ENCODE measurements at regions of chr1 and their contacts with region 1.

Region 1: DNA sequence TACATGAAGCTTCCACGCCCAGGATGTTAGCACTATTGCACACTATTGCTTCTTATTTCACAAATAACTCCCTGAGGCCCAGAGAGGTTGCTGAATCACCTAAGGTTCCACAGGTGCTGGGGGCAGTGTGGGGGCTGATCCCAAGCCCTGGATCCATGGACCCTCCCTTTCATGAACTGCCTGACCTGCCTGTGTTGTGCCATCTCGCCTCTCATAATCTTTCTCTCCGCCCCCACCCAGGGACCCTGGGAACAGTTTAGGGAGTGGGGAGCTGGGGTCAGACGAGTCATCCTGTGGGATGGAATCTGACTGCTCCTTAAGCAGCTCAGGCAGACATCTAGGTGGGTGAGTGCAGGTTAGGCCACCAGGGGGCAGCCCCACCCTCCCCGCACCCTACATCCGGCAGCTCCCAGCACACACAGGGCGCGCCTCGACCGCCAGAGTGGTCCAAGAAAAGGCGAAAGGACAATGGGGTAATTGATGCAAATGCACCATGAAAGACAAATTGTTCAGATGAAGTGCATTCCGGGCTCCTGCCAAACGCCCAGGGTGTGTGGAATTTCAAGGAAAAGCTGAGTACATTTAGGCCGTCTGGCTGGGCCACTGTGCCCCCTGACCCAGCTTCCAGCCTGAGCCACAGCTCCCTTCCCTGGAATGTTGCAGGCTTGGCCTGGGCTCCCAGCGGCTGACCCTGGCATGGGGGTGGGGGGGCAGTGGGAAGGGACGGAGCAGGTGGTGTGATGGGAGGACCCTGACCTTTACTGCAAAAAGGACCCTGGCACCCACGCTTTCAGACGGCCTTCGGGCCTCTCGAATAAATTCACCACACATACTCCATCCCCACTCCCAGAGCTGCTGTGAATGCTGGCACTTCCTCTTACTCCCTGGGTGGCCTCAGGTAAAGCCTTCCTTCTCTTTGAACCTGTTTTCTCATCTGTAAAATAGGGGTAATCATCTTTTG is 20.8 kb downstream of the PHLDA3 start:
- H3K4me3 Mint-ChIP-seq: no peak overlapping the region
- H3K27ac Mint-ChIP-seq: no peak overlapping the region
- H3K4me1 Mint-ChIP-seq: peaks cover 35% of the 10 kb centered on the region
- H3K27me3 Mint-ChIP-seq: peaks cover 11% of the 10 kb centered on the region

Region 2: GRCh38 chr1:201154389-201155165 is 293.6 kb before region 1 on chr1 and contains the start of gene TMEM9:
- intact Hi-C with region 1: no loop called
- H3K4me3 Mint-ChIP-seq: peak within 1 kb of the TSS; percentile 82
- H3K27ac Mint-ChIP-seq: peak within 1 kb of the TSS; percentile 82
- H3K4me1 Mint-ChIP-seq: peaks cover 12% of the 10 kb centered on the region
- H3K27me3 Mint-ChIP-seq: peaks cover 6% of the 10 kb centered on the region

Region 3: DNA sequence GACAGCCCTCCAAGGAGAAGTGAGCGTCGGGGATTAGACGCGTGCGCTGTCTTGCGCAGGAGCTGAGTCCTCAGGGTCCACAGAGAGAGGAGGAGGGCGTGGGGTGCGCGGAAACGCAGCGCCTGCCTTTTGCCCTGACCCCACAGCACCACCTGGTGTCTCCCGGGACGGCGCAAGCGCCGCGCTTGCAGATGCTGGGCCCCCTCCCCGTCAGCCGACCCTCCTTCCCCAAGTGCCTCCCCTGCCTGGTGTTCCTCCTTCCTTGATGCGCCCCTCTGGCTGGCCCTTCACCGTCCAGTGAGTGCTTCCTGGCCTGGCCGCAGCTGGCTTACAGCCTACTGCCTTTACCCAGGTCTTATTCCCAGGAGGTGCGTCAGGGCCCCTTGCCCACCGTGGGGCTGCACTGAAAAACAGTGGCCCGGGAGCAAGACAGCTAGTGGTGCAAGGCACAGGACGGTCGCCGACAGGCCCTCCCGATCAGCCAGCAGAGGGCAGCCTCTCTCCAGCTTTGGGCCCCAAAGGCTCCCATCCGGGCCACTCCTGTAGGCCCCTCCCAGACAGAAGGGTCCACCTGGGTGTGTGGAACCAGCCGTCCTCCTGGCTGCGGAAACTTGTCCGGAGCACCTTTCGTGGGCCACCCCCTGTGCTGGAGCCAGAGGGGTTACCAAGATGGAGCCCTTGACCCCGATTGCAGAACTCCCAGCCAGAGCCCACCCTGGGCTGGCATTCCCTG is 33.7 kb after region 1 on chr1:
- intact Hi-C with region 1: loop called (anchors 1 kb)
- H3K4me3 Mint-ChIP-seq: peak overlapping the region; percentile 75
- H3K27ac Mint-ChIP-seq: peak overlapping the region; percentile 73
- H3K4me1 Mint-ChIP-seq: peaks cover 49% of the 10 kb centered on the region
- H3K27me3 Mint-ChIP-seq: peaks cover 9% of the 10 kb centered on the region

Region 4: GRCh38 chr1:201513498-201514243 is 65.5 kb after region 1 on chr1:
- intact Hi-C with region 1: loop called (anchors 1 kb)
- H3K4me3 Mint-ChIP-seq: no peak overlapping the region
- H3K27ac Mint-ChIP-seq: no peak overlapping the region
- H3K4me1 Mint-ChIP-seq: peaks cover 36% of the 10 kb centered on the region
- H3K27me3 Mint-ChIP-seq: no peaks in the 10 kb centered on the region

Measured in dendritic cell treated with granulocyte-macrophage colony-stimulating factor and Interleukin-4, amounts not matched to agents 40 ng/mL and 50 ng/mL, for 4 days (primary cell).